Endothelial cell of umbilical vein (primary cell): ENCODE measurements at regions of chr15 and their contacts with region 1.

Region 1: GRCh38 chr15:64536244-64536836 is 76.0 kb downstream of the ZNF609 start:
- DNase-seq: peak; percentile 91
- H3K4me3 ChIP-seq: no peak overlapping the region
- H3K27ac ChIP-seq: peak overlapping the region; percentile 89
- H3K4me1 ChIP-seq: peaks cover 16% of the 10 kb centered on the region
- H3K27me3 ChIP-seq: no peaks in the 10 kb centered on the region
- CTCF ChIP-seq: no peak
- POLR2A ChIP-seq: no peak

Region 2: GRCh38 chr15:64443747-64444621 is 92.4 kb before region 1 on chr15:
- CTCF ChIA-PET with region 1: no interaction called
- POLR2A ChIA-PET with region 1: no interaction called
- dilution Hi-C with region 1: no loop called
- intact Hi-C with region 1: loop called (anchors 1 kb)
- DNase-seq: peak; percentile 93
- H3K4me3 ChIP-seq: peak overlapping the region in 2 of 3 experiments; percentile 6 to 58
- H3K27ac ChIP-seq: peak overlapping the region; percentile 97
- H3K4me1 ChIP-seq: peaks cover 34% of the 10 kb centered on the region
- H3K27me3 ChIP-seq: no peaks in the 10 kb centered on the region
- CTCF ChIP-seq: no peak
- POLR2A ChIP-seq: peak; percentile 56